Activated naive CD4-positive, alpha-beta T cell treated with anti-CD3 and anti-CD28 coated beads for 36 hours (primary cell): ENCODE measurements at regions of chr14 and their contacts with region 1.

Region 1: DNA sequence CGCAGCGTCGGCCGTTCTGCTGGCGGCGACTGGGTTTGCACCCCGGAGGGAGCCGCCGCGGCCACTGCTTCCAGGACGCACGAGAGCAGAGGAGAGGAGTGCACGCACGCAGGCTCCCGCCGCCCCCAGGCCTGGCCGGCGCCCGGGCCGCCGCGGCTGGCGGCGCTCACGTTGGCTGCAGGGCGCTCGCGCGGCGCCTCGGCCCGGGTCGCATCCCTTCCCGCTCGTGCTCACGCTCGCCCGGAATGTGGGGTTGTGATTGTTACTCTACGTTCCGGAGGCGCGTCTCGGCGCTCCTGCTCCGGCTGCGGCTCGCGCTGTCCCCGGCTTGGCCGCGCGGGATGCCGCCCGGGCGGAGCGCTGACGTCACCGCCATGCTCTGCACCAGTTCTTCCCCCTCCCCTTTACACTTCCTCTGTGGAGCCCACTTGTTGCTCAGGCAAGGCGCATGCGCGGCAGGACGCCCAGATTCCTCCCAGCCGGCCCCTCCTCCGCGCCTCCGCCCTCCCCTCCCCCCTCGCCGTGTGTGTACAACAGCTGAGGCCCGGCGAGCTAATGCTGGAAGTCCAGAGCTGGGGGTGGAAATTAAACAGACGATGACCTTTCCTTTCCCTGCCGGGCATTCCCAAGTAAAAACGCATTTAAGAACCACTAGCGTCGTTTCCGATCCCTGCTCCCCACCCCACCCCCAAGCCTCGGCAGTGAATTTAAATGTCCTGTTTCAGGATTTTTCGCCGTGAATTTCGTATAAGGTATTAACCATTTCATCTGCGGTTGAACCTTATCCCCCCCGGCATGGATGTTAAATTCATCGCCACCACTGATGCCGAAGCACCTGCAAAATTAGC is at the start of gene IRF2BPL:
- DNase-seq: peak; percentile 96
- H3K4me3 Mint-ChIP-seq: peak within 1 kb of the TSS; percentile 82
- H3K27ac Mint-ChIP-seq: peak within 1 kb of the TSS; percentile 94
- H3K4me1 Mint-ChIP-seq: peaks cover 57% of the 10 kb centered on the region
- H3K27me3 Mint-ChIP-seq: no peaks in the 10 kb centered on the region
- total RNA-seq, gene IRF2BPL: 34.8 to 35.2 TPM

Region 2: DNA sequence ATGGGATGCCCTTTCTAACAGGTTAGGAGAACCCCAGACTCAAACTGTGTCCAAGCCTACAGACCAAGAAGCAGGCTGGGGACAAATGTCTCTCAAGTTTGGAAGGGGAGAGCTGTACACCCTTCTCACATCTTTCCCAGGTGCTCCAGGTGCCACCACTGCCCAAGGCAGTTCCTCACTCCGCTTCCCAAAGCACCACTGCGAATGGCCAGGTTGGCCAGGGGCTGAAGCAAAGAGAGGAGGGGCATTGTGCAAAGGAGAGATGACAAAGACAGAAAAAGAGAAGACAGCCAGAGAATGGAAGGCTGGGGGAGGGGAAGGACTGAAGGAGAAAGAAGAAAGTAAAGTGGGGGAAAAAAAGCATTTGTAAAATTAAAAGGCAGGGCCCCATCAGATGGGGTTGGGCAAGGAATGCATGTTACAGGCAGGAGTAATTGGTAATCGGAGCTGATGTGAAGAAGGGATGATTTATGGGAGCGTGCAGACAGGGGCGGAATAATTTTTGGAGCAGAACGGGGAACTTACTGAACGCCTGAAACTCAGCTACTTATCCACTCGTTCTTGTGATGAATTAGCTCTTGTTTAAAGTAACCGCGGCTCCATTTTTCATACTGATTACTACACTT is 486.9 kb before region 1 on chr14:
- CTCF ChIA-PET with region 1: no interaction called
- intact Hi-C with region 1: no loop called
- DNase-seq: no peak
- H3K4me3 Mint-ChIP-seq: no peak overlapping the region
- H3K27ac Mint-ChIP-seq: no peak overlapping the region
- H3K4me1 Mint-ChIP-seq: no peaks in the 10 kb centered on the region
- H3K27me3 Mint-ChIP-seq: peaks cover 7% of the 10 kb centered on the region

Region 3: GRCh38 chr14:76911473-76911872 is 117.1 kb before region 1 on chr14:
- CTCF ChIA-PET with region 1: interaction called, 60 read pairs
- intact Hi-C with region 1: no loop called
- DNase-seq: no peak
- H3K4me3 Mint-ChIP-seq: no peak overlapping the region
- H3K27ac Mint-ChIP-seq: no peak overlapping the region
- H3K4me1 Mint-ChIP-seq: peaks cover 15% of the 10 kb centered on the region
- H3K27me3 Mint-ChIP-seq: no peaks in the 10 kb centered on the region

Region 4: GRCh38 chr14:76962303-76962660 is 66.3 kb before region 1 on chr14:
- CTCF ChIA-PET with region 1: interaction called, 16 read pairs
- intact Hi-C with region 1: loop called (anchors 1 kb)
- DNase-seq: no peak
- H3K4me3 Mint-ChIP-seq: peak overlapping the region; percentile 68
- H3K27ac Mint-ChIP-seq: peak overlapping the region; percentile 98
- H3K4me1 Mint-ChIP-seq: peaks cover 90% of the 10 kb centered on the region
- H3K27me3 Mint-ChIP-seq: no peaks in the 10 kb centered on the region

Region 5: DNA sequence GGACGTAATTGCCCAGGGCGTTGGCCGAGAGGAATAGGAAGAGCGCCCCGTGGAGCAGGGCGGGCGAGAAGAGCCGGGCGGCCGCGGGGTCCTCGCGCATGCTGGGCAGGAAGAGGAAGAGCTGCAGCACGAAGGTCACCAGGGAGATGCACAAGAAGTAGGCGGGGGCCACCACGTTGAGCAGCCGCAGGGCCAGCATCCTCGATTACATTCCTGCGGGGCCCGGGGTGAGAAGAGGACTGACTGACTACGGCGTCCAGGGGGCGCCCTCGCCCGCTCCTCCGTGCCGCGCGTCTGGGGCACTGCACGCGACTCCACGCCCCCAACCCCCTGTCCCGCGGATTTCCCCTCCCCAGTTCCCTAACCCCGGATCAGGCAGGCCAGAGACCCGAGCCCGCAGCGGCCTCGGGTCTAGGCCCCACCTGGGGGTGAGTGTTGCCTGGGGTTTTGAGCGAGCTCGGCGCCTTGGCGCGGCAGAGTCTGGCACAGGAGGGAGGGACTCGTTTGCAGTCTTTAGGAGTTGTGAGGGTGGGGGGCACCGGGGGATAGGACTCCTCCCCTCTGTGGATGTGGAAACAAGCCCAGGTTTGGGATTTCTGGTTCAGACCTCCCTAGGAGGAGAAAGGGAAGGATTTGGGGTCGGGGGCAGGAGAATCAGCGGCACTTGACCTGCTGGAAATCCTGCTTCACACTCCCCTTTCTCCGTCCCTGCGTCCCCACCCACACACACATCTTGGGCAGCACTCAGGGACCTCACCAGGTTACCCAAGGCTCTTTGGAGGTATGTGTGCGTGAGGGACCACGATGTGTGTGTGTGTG is 111.1 kb after region 1 on chr14:
- CTCF ChIA-PET with region 1: no interaction called
- intact Hi-C with region 1: no loop called
- DNase-seq: peak; percentile 60
- H3K4me3 Mint-ChIP-seq: no peak overlapping the region
- H3K27ac Mint-ChIP-seq: no peak overlapping the region
- H3K4me1 Mint-ChIP-seq: peaks cover 20% of the 10 kb centered on the region
- H3K27me3 Mint-ChIP-seq: peaks cover 68% of the 10 kb centered on the region